Activated T-helper 2 cell treated with anti-CD3 and anti-CD28 coated beads, Interferon-gamma antibody, Interleukin-2, Interleukin-4, amounts not matched to agents 10 μg/mL and 5 μg/mL and 100 μg/mL, durations not matched to agents 14 hours and 24 hours and 36 hours (primary cell): ENCODE measurements at regions of chr22 and their contacts with region 1.

Region 1: GRCh38 chr22:39117585-39118191 is 20.6 kb downstream of the APOBEC3H start:
- DNase-seq: peak; percentile 58
- H3K4me3 Mint-ChIP-seq: peak overlapping the region; percentile 41
- H3K27ac Mint-ChIP-seq: peak overlapping the region; percentile 90
- H3K4me1 Mint-ChIP-seq: peaks cover 50% of the 10 kb centered on the region
- H3K27me3 Mint-ChIP-seq: no peaks in the 10 kb centered on the region

Region 2: DNA sequence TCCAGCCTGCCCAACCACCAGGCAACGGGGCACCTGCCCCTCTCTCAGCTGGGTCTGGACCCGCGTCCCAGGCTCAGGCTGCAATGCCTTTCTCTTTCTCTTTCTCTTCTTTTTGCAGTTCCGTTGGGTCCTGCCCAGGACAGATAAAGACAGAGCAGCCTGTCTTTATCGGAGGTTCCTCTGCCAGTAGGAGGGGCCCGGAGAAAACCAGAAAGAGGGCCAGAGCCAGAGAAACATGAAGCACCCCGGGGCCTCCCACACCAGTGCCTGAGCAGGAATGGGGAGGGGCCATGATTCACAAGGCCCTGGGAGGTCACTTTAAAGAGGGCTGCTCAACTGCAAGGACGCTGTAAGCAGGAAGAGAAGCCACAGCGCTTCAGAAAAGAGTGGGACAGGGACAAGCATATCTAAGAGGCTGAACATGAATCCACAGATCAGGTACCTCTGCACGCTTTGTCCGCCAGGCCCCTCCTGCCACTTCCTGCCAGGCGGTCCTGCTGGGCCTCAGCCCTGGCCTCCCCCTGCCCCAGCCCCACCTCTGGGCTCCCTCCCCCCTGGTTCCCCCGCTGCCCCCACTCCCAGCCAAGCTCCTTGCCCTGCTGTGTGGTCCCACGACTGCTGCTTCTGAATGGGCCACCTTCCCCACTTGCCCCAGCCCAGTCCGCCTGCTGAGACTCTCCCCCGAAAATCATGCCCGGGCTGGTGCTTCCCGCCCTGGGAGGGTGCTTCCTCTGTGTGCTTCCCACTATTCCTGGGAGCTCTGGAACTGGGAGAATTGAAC is 103.6 kb before region 1 on chr22 and contains the start of gene APOBEC3C:
- intact Hi-C with region 1: loop called (anchors 2 kb)
- DNase-seq: peak; percentile 83
- H3K4me3 Mint-ChIP-seq: peak within 1 kb of the TSS; percentile 92
- H3K27ac Mint-ChIP-seq: peak within 1 kb of the TSS; percentile 98
- H3K4me1 Mint-ChIP-seq: peaks cover 19% of the 10 kb centered on the region
- H3K27me3 Mint-ChIP-seq: no peaks in the 10 kb centered on the region
- total RNA-seq, gene APOBEC3C: 91.7 and 93.1 TPM in 2 replicates

Region 3: DNA sequence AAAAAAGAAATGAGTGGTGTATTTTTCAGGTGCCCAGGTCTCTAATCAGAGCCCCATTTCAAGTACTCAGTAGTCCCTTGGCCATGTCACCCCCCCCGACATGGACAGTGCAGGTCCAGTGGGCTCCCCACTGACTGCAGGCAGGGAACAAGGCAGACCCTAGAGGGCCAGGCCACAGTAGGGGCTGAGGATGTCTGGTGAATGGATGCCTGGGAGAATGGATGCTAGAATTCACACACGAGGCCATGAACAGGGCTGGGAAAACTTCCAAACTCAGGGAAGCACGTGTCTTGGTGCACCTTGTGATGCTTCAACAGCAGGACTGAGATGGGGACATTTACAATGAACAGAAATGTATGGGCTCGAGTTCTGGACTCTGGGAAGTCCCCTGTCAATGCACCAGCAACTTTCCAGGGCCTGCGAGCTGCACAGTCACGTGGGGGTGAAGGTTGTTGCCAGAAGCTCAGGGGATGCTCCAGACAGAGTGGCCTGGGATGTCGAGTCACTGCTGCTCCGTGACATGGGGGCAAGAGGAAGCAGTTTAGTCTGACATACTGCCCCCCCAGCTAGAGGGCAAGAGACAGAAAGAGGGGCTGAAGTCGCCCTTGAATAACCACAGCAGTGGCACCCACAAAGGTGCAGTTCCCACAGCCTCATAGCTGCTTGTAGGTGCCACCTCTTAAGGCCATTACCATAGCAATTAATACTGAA is 37.5 kb before region 1 on chr22:
- intact Hi-C with region 1: loop called (anchors 1 kb)
- DNase-seq: no peak
- H3K4me3 Mint-ChIP-seq: no peak overlapping the region
- H3K27ac Mint-ChIP-seq: peak overlapping the region; percentile 20
- H3K4me1 Mint-ChIP-seq: peaks cover 32% of the 10 kb centered on the region
- H3K27me3 Mint-ChIP-seq: no peaks in the 10 kb centered on the region

Region 4: GRCh38 chr22:39097098-39098020 is 20.3 kb before region 1 on chr22 and contains the start of gene APOBEC3H:
- intact Hi-C with region 1: loop called (anchors 1 kb)
- DNase-seq: peak; percentile 31
- H3K4me3 Mint-ChIP-seq: peak within 1 kb of the TSS; percentile 75
- H3K27ac Mint-ChIP-seq: peak within 1 kb of the TSS; percentile 92
- H3K4me1 Mint-ChIP-seq: peaks cover 66% of the 10 kb centered on the region
- H3K27me3 Mint-ChIP-seq: no peaks in the 10 kb centered on the region
- total RNA-seq, gene APOBEC3H: 7.3 and 8.3 TPM in 2 replicates